GM13976 (cell line): ENCODE measurements at regions of chr14 and their contacts with region 1.

Region 1: GRCh38 chr14:96100161-96101029 is 61.2 kb downstream of the C14orf132 start:
- DNase-seq: peak; percentile 84
- CTCF ChIP-seq: peak; percentile 75

Region 2: GRCh38 chr14:96275177-96276112 is 175.1 kb after region 1 on chr14:
- in situ Hi-C with region 1: loop called (anchors 10 kb)
- DNase-seq: peak; percentile 81
- CTCF ChIP-seq: peak; percentile 83

Region 3: DNA sequence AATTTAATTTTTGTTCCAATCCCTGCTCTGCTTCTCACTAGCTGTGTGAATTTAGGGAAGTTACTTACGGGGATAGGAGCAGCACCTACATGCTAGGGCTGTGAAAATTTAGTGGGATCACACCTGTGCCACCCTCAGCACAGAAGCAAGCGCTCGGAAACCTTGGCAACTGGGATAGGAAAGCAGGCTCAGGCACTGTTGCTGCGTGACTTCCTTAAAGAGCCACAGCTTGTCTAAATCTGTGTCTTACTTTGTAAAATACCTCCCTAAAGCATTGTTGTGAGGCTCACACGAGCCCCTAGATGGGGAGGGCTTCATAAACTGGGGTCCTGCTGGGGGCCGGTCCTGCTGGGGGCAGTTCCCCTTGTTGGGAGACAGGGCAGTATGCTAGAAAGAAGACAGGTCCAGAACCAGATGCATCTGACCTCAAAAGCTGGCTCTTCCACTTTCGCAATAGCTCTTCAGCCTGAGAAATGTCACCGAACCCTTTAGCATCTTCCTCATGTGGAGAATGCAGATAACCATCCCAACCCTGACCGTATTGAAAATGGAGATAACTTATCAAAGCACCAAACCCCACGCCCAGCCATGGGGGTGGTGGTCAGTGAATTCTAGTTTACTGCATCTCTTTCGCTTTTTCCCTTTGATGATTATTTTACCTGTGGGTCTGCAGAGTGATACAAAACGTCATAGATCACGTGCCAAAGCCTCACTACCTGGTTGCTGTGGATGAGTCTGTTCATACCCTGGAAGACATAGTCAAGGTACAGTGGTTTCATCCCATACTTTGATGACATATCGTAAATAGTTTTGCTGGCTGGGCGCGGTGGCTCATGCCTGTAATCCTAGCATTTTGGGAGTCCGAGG is 345.7 kb after region 1 on chr14:
- in situ Hi-C with region 1: loop called (anchors 25 kb)
- DNase-seq: no peak
- CTCF ChIP-seq: no peak